ENCODE measurements at regions of chr12 and their contacts with region 1.

Region 1: DNA sequence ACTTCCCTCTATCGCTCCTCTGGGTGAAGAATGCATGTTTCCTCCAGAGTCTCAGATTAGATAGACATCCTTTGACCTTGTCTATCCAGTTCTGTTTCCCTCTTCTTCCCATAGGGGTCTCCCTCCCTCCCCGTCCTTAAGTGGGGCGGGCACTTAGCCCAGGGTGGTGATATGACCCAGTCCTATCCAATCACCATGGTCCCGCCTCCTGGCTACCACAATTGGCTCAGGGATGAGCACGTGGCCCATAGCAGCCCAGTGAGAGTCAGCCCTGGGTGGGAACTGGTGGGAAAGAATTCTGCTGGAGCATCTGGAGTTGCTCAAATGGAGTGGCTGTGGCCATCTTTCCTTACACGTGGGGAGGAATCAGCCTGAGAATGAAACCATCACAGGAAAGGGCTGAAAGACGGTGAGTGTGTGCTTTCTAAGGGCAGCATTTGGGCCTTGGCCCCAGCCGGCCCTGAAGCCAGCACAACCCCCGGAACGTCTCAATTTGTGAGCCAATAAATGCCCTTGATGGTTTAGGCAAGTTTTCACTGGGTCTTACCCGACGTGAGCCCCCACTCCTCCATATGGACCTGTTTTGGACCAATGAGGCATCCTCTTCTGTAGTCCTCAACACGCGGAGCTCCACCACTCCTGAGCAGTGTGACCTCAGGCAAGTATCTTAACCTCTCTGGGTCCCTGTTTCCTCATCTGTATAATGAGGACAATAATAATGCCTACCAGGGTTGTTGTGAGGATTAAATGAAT is 14.4 kb upstream of the MLXIP start:
- DNase-seq: peak; percentile 95
- H3K4me3 ChIP-seq: no peak overlapping the region
- H3K27ac ChIP-seq: peak overlapping the region; percentile 60
- H3K4me1 ChIP-seq: peaks cover 37% of the 10 kb centered on the region
- H3K27me3 ChIP-seq: no peaks in the 10 kb centered on the region
- CTCF ChIP-seq: peak; percentile 48 to 57
- POLR2A ChIP-seq: peak; percentile 58

Region 2: GRCh38 chr12:122040579-122041386 is 23.4 kb before region 1 on chr12:
- CTCF ChIA-PET with region 1: no interaction called
- POLR2A ChIA-PET with region 1: no interaction called
- dilution Hi-C with region 1: no loop called
- intact Hi-C with region 1: no loop called
- DNase-seq: no peak
- H3K4me3 ChIP-seq: no peak overlapping the region
- H3K27ac ChIP-seq: no peak overlapping the region
- H3K4me1 ChIP-seq: no peaks in the 10 kb centered on the region
- H3K27me3 ChIP-seq: no peaks in the 10 kb centered on the region
- CTCF ChIP-seq: no peak
- POLR2A ChIP-seq: no peak

Region 3: GRCh38 chr12:122107261-122107660 is 43.1 kb after region 1 on chr12:
- CTCF ChIA-PET with region 1: interaction called, 3 read pairs
- POLR2A ChIA-PET with region 1: no interaction called
- dilution Hi-C with region 1: no loop called
- intact Hi-C with region 1: loop called (anchors 5 kb)
- DNase-seq: no peak
- H3K4me3 ChIP-seq: no peak overlapping the region
- H3K27ac ChIP-seq: no peak overlapping the region
- H3K4me1 ChIP-seq: peaks cover 6% of the 10 kb centered on the region
- H3K27me3 ChIP-seq: no peaks in the 10 kb centered on the region
- CTCF ChIP-seq: no peak
- POLR2A ChIP-seq: no peak

Region 4: DNA sequence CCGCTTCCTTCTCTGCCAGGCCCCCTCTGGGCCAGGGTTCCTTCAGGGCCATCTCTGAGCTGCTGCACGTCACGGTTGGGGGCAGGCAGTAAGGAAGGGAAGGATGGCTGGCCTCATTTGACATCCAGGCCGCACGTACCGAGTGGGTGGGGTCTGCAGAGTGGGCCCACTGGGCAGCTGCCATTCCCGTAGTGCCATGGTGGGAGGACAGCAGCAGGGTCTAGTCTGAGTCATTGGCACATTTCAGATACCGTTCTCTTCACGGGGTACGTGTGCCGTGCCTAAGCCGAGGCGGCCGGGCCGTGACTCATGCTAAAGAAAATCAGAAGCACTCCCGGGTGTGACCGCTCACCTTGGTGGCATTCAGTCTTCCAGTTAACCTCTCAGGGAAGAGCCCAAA is 65.9 kb after region 1 on chr12:
- CTCF ChIA-PET with region 1: interaction called, 10 read pairs
- POLR2A ChIA-PET with region 1: no interaction called
- dilution Hi-C with region 1: no loop called
- intact Hi-C with region 1: no loop called
- DNase-seq: no peak
- H3K4me3 ChIP-seq: no peak overlapping the region
- H3K27ac ChIP-seq: no peak overlapping the region
- H3K4me1 ChIP-seq: no peaks in the 10 kb centered on the region
- H3K27me3 ChIP-seq: no peaks in the 10 kb centered on the region
- CTCF ChIP-seq: no peak
- POLR2A ChIP-seq: no peak

Region 5: DNA sequence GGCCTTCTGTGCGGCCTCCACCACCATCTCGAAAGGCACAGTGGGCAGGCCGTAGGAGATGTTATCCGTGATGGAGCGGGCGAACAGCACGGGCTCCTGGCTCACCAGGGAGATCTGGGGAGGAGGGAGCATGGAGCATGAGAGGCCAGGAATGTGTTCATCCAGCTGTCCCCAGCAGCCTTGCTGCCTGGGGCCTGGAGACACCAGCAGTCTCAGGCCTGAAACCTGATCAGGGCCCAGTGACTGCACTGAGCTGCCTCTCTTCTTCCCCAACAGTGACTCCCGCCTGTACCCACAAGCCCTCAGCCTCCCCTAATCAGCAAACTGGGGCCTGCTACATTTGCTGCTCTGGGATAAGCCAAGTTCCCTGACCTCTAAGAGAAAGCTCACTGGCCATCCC is 871.1 kb after region 1 on chr12:
- CTCF ChIA-PET with region 1: no interaction called
- POLR2A ChIA-PET with region 1: no interaction called
- dilution Hi-C with region 1: no loop called
- intact Hi-C with region 1: no loop called
- DNase-seq: no peak
- H3K4me3 ChIP-seq: no peak overlapping the region
- H3K27ac ChIP-seq: no peak overlapping the region
- H3K4me1 ChIP-seq: no peaks in the 10 kb centered on the region
- H3K27me3 ChIP-seq: no peaks in the 10 kb centered on the region
- CTCF ChIP-seq: no peak
- POLR2A ChIP-seq: no peak

Measured in endothelial cell of umbilical vein (primary cell).